ENCODE measurements at regions of chr20 and their contacts with region 1.

Region 1: DNA sequence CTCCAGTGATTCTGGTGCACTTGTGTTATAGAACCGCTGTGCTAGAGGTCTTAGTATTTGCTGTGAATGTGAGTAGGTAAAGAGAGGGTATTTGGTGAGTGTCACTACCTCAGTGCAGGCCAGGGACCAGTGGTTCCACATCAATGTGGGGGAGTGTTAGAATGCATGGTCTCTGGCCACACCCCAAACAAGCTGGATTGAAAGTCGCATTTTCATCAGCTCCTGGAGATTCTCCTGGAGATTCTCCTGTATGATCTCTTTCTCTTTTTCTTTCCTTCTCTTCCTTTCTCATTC is 26.8 kb upstream of the BCAS1 start:
- DNase-seq: no peak
- H3K4me3 ChIP-seq: no peak overlapping the region
- H3K27ac ChIP-seq: no peak overlapping the region
- H3K4me1 ChIP-seq: no peaks in the 10 kb centered on the region
- H3K27me3 ChIP-seq: peaks cover 0 to 14% (median 0%) of the 10 kb centered on the region in 4 donors
- CTCF ChIP-seq: no peak
- EP300 ChIP-seq: no peak
- POLR2A ChIP-seq: no peak

Region 2: DNA sequence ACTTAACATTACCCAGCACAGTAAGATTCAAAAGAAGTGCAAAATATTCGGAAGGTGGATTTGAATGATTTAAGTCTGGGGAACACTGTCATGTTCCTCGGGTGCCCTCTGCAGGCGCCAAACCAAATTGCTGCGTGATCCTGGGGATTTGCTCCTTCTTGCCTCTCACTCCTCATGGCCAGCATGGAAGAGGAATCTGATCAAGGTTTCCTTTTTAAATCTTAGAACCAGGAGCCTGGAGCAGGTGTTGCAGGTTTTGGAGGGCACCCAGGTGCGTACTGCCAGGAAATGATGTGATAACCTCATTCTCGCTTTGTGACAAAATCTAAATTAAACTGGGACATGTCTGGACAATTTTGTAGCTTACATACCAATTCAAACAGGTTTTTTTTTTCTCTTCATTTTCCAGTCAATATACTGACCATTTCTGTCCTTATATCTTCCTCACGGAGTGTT is 102.6 kb after region 1 on chr20:
- intact Hi-C with region 1: loop called (anchors 2 kb)
- DNase-seq: peak; percentile 94
- H3K4me3 ChIP-seq: no peak overlapping the region
- H3K27ac ChIP-seq: no peak overlapping the region
- H3K4me1 ChIP-seq: no peaks in the 10 kb centered on the region
- H3K27me3 ChIP-seq: peaks cover 0 to 4% (median 0%) of the 10 kb centered on the region in 4 donors
- CTCF ChIP-seq: peak; percentile 74 to 94 (median 74)
- EP300 ChIP-seq: no peak
- POLR2A ChIP-seq: no peak

Region 3: DNA sequence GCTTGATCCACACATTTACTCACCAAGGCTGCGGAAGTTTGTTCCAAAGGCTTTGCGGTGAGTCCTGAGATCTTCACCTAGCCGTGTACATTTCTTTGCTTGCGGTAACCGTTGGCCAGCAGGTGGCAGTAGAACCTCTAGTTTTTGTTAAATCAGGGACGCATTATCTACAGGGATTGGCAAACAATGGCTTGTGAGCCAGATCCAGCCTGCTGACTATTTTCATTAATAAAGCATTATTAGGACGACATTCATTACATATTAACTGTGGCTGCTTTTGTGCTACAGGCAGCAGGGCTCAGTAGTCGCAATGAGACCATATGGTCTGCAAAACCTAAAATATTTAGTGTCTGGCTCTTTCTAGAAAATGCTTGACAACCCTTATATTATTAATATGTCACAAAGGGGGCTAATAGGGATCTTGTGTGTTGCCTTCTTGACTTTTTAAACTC is 552.4 kb after region 1 on chr20:
- intact Hi-C with region 1: loop called (anchors 5 kb)
- DNase-seq: no peak
- H3K4me3 ChIP-seq: no peak overlapping the region
- H3K27ac ChIP-seq: no peak overlapping the region
- H3K4me1 ChIP-seq: no peaks in the 10 kb centered on the region
- H3K27me3 ChIP-seq: peaks cover 0 to 3% (median 0%) of the 10 kb centered on the region in 4 donors
- CTCF ChIP-seq: peak; percentile 65 to 86 (median 69)
- EP300 ChIP-seq: no peak
- POLR2A ChIP-seq: no peak

Region 4: GRCh38 chr20:54822399-54822798 is 725.2 kb after region 1 on chr20:
- intact Hi-C with region 1: no loop called
- DNase-seq: no peak
- H3K4me3 ChIP-seq: no peak overlapping the region
- H3K27ac ChIP-seq: no peak overlapping the region
- H3K4me1 ChIP-seq: no peaks in the 10 kb centered on the region
- H3K27me3 ChIP-seq: no peaks in the 10 kb centered on the region
- CTCF ChIP-seq: no peak
- EP300 ChIP-seq: no peak
- POLR2A ChIP-seq: no peak

Measured in esophagus muscularis mucosa (tissue), 4 donors.